ENCODE measurements at regions of chr1 and their contacts with region 1.

Region 1: DNA sequence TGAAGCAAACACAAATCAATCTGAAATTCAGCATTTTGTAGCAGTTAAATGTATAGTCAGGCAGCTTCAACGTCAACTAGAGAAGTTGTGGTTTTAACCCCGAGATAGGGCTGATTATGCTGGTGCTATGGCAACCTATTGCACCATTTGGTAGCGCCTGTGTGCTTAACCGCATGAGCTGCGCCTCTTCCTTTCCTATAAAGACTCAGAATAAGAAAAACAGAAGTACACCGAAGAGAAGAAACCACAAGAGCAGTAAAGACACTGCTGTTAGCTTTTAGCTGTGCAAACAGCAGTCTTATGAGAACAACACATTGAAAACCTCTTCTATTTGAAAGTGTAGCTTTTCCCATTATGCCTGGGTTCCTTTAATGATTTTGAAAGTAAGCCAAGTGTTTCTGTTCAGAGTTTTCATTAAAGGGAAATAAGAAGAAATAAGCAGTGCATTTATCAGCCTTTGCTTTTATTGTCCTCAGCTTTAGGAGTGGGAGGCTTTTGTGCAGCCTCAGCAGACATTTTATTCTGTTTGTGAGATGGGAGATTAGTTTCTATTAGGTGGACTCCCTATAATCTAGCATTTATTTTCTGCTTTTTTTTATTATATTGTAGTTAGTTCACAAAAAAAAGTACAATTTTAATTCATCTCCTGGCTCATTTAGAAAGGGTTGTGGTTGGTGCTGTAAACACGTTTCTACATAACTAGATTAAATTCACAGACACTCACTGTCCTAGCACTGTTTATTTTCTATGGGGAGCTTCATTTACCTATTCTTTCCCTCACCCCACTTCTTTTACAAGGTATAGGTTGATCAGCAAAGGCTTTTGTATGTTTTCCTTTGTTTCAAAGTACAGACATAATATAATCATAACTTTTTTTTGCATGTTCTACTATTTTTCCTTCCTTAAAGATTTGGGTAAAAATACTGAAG is 43.3 kb downstream of the PTPRC start:
- DNase-seq: peak; percentile 97
- H3K4me3 ChIP-seq: no peak overlapping the region
- H3K27ac ChIP-seq: peak overlapping the region; percentile 88
- H3K27me3 ChIP-seq: no peaks in the 10 kb centered on the region
- CTCF ChIP-seq: no peak

Region 2: DNA sequence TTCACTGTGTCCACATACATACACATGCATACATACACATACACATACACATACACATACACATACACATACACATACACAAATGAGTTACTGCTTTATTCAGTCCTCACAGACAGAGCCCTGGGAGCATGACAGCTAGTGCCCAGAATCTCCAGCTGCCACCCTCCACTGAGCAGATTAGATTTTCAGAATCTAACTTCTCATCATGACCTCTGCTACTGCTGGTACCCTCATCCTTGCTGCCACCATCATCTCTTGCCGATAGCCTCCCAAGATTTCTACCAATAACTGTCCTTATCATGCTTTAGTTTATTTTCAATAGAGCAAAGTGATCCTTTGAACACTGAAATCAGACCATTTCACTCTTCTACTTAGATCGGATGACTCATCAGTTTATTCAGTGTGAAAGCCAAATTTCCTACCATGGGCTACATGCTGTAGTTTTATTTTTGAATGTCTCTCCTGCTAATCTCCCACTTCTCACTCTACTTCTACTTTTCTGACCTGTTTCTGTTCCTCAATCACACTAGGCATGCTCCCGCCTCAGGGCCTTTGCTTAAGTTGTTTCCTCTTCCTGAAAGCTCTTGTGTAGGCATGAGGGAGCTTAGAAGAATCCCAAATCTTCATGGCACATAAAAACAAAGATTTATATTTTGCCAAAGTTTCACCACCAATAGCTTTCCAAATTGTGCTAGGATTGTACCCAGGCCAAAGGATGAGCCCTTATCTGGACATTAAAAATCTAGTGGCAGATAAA is 184.6 kb before region 1 on chr1:
- in situ Hi-C with region 1: loop called (anchors 25 kb)
- DNase-seq: peak; percentile 33
- H3K4me3 ChIP-seq: no peak overlapping the region
- H3K27ac ChIP-seq: peak overlapping the region; percentile 25
- H3K27me3 ChIP-seq: no peaks in the 10 kb centered on the region
- CTCF ChIP-seq: no peak

Region 3: DNA sequence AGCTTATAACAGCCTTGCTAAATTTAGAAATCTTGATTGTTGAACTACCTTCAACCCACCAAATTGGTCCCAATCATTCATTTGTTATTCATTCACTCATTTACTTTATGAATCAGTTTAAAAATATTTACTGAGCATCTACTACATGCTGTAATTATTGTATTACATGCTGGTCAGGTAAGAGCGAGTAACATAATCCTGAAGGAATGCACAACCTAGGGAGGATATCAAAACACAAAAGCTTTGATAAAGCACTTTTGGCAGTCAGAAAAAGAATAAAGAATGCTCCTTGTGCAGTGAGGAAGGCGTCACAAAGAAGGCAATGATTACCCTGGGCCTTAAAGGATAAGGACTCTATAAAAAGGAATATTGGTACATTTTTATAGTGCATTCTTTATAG is 826.6 kb after region 1 on chr1:
- in situ Hi-C with region 1: no loop called
- DNase-seq: no peak
- H3K4me3 ChIP-seq: no peak overlapping the region
- H3K27ac ChIP-seq: no peak overlapping the region
- H3K27me3 ChIP-seq: no peaks in the 10 kb centered on the region
- CTCF ChIP-seq: no peak